ENCODE measurements at regions of chr5 and their contacts with region 1.

Region 1: DNA sequence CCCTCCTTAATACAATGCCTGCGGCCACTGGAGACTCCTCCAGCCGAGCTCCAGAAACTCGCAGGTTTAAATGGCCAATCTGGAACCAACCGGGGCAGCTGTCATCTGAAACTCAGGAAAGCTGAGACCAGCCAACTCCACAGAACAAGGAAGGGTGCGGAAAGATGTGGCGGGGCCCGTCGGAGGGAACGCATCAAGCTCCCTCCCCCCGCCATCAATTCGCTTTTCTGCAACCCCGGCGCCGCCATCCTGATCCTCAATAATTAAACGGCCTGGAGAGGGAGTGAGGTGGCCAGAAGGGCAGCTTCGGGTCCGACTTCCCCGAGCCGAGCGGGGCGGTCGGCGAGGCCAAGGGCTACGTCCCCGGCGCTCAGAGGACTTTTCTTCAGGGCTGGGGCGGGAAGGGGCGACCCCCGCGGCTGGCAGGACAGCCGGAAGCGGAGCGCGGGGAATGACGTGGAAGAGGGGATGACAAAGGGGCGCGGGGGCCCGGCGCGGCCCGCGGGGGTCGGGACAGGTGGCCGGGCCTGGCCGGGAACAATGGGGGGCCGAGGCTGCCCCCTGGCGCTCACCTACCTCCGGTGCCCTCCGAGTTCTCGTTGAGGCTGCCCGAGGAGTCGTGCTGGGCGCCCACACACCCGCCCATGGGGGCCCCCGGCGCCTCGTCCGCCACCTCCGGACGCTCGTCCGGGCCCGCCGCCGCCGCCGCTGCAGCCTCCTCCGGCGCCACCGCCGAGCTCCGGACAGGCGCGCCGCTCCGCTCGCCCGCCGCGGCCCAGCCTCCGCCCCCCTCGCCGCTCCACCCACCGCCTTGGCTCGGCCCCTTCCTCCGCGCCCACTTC is at the start of gene UBTD2:
- DNase-seq: peak; percentile 74
- H3K4me3 Mint-ChIP-seq: peak within 1 kb of the TSS; percentile 87
- H3K27ac Mint-ChIP-seq: peak within 1 kb of the TSS; percentile 73
- H3K4me1 Mint-ChIP-seq: peaks cover 16% of the 10 kb centered on the region
- H3K27me3 Mint-ChIP-seq: peaks cover 30% of the 10 kb centered on the region
- total RNA-seq, gene UBTD2: 5.0 and 6.1 TPM in 2 replicates

Region 2: DNA sequence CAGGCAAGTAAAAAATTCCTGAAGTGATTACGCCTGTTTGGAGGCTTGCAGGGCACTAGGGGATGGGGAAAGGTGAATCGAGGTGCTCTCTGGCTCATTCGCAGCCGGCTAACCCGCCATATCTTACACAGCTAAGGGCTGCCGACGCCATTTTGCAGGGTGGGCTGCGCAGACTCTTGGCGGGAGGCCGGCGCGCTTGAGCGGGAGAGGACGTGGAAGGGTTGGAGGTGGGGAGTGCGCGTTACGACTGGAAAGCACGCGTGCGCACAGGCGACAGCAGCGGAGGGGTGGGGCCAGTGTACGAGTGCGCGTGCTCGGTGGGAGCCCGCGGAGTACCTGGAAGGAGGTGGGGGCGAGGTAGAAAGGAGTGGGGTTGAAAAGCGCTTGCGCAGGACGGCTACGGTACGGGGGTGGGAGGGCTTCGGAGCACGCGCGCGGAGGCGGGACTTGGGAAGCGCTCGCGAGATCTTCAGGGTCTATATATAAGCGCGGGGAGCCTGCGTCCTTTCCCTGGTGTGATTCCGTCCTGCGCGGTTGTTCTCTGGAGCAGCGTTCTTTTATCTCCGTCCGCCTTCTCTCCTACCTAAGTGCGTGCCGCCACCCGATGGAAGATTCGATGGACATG is 895.8 kb before region 1 on chr5 and contains the start of gene NPM1:
- intact Hi-C with region 1: loop called (anchors 5 kb)
- DNase-seq: peak; percentile 97
- H3K4me3 Mint-ChIP-seq: peak within 1 kb of the TSS; percentile 97
- H3K27ac Mint-ChIP-seq: peak within 1 kb of the TSS; percentile 98
- H3K4me1 Mint-ChIP-seq: peaks cover 43% of the 10 kb centered on the region
- H3K27me3 Mint-ChIP-seq: peaks cover 8% of the 10 kb centered on the region
- total RNA-seq, gene NPM1: 2,729 and 2,809 TPM in 2 replicates

Region 3: DNA sequence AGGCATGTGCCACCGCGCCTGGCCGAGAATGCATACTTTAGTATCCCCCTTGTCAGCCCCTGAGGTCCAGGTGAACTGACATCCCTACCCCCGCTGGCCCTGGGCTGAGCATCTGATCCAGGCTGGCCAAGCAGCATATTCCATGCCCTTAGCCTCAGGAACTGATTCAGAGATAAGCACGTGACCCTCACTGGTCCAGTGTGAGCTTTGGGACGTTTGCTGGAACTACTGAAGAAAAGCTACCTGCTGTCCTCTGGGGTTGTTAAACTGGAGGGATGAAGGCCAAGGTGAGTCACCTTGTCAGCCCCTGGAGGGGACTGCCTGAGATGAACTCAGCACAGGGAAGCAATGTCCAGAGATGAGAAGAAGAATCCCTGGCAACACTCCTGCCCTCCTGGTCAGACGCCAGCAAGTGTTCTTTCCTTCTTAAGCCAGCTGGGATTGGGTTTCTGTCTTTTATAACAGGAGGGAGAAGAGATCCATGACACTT is 217.7 kb before region 1 on chr5:
- intact Hi-C with region 1: loop called (anchors 2 kb)
- DNase-seq: no peak
- H3K4me3 Mint-ChIP-seq: no peak overlapping the region
- H3K27ac Mint-ChIP-seq: no peak overlapping the region
- H3K4me1 Mint-ChIP-seq: peaks cover 47% of the 10 kb centered on the region
- H3K27me3 Mint-ChIP-seq: no peaks in the 10 kb centered on the region

Region 4: DNA sequence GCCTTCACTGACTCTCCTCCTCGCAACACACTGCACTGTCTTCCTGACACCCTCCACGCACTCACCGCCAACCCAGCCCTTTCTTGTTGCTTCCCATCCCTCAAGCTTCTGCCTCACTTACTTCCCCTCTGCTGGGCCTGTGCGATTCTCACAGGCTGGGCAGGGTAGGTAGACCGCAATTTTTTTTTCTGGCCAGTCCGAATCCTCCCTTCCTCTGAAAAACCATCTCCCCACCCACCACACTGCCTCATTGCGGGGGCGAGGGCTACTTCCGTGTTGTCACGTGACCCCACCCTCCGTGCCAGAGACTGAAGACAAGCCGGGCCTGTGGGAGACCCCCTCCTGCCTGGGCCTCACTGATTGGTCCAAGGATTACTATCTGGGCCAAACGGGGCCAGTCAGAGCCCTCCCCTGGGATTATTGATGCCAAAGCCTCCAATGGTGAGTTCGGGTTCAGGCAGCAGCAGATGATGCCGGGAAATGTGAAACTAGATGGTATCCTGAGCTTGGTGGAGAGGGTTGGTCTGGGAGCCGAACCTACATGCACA is 168.3 kb before region 1 on chr5:
- intact Hi-C with region 1: loop called (anchors 1 kb)
- DNase-seq: peak; percentile 68
- H3K4me3 Mint-ChIP-seq: peak overlapping the region; percentile 78
- H3K27ac Mint-ChIP-seq: peak overlapping the region; percentile 91
- H3K4me1 Mint-ChIP-seq: peaks cover 67% of the 10 kb centered on the region
- H3K27me3 Mint-ChIP-seq: no peaks in the 10 kb centered on the region

Region 5: DNA sequence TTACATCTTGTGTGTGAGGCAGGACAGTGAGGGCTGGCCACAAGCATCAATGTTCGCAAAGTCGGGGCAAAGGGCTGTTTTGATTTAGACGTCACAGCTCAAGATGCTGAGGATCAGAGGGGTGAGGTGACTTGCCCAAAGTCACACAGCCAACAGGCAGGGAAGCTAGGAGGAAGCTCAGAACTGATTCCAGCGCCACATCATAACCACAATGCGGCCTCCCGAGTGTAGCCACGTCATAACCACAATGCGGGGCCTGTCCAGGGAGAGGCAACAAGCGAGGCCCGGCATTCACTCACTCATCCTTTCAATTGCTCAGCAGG is 109.4 kb before region 1 on chr5:
- intact Hi-C with region 1: loop called (anchors 1 kb)
- DNase-seq: peak; percentile 74
- H3K4me3 Mint-ChIP-seq: peak overlapping the region; percentile 87
- H3K27ac Mint-ChIP-seq: peak overlapping the region; percentile 100
- H3K4me1 Mint-ChIP-seq: peaks cover 83% of the 10 kb centered on the region
- H3K27me3 Mint-ChIP-seq: no peaks in the 10 kb centered on the region

Region 6: DNA sequence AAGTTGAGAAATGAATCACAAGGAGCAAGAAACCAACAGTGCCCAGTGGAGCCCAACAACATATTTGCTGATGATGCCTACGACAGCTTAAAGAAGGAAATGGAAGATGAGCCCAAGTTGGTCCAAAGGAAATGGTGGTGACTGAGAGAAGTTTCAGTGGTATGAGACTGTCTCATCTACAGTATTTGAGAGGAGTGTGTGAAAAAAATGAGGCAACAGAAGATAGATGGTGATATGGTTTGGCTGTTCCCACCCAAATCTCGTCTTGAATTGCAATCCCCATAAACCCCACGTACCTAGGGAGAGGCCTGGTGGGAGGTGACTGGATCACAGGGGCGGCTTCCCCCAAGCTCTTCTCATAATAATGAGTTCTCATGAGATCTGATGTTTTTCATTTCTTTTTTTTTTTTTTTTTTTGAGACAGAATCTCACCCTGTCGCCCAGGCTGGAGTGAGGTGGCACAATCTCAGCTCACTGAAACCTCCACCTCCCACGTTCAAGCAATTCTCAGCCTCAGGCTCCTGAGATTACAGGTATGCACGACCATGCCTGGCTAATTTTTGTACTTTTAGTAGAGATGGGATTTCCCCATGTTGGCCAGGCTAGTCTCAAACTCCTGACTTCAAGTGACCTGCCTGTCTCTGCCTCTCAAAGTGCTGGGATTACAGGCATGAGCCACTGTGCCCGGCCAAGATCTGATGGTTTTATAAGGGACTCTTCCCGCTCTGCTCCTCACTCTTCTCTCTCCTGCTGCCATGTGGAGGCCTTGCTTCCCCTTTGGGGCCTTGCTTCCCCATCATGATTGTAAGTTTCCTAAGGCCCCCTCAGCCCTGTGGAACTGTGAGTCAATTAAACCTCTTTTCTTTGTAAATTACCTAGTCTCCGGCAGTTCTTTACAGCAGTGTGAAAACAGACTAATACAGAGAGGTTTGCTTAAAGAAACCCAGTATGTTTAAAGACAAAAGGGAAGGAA is 59.1 kb before region 1 on chr5:
- intact Hi-C with region 1: loop called (anchors 1 kb)
- DNase-seq: no peak
- H3K4me3 Mint-ChIP-seq: no peak overlapping the region
- H3K27ac Mint-ChIP-seq: peak overlapping the region; percentile 87
- H3K4me1 Mint-ChIP-seq: peaks cover 28% of the 10 kb centered on the region
- H3K27me3 Mint-ChIP-seq: peaks cover 5% of the 10 kb centered on the region

Region 7: GRCh38 chr5:172235132-172235780 is 48.0 kb before region 1 on chr5:
- intact Hi-C with region 1: loop called (anchors 5 kb)
- DNase-seq: no peak
- H3K4me3 Mint-ChIP-seq: no peak overlapping the region
- H3K27ac Mint-ChIP-seq: no peak overlapping the region
- H3K4me1 Mint-ChIP-seq: peaks cover 45% of the 10 kb centered on the region
- H3K27me3 Mint-ChIP-seq: peaks cover 2% of the 10 kb centered on the region